Left cardiac atrium (tissue), 4 donors: ENCODE measurements at regions of chr7 and their contacts with region 1.

Region 1: DNA sequence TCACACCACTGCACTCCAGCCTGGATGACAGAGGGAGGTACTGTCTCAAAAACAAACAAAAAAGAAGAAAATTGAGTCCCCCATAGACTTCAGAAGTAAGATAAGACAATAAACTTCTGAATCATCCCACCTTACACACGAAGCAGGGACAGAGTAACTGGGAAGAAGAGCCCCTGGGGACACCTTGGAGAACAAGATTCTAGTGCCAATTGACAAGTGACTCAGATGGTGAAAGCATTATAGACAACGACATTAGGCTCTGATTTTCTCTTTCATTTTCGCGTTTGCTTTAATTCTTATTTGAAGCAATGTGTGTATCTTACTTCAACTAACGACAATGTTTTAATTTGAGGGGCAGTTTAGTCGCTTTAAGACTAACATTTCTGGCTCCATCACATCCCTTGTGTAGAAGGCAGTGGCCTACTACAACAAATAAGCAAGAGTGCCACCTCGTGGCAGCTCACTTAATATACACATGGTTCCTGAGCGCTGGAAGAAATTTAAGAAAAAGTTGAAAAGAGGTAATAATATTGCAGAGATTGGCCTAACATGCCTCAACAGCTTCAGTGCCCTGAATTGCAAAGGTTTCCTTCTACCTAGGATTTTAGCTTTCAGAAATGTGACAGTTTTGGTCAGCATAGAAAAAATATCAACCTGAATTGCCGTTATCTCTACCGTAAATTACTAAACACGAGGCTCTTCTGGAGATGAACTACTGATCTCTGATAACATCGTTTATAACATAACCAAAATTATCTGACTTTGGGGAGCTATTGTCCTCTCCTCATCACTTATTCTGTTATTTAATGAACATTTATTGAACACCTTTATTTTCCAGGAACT is 36.7 kb downstream of the ASNS start:
- DNase-seq: peak; percentile 73
- ATAC-seq: peak; percentile 51 to 65

Region 2: DNA sequence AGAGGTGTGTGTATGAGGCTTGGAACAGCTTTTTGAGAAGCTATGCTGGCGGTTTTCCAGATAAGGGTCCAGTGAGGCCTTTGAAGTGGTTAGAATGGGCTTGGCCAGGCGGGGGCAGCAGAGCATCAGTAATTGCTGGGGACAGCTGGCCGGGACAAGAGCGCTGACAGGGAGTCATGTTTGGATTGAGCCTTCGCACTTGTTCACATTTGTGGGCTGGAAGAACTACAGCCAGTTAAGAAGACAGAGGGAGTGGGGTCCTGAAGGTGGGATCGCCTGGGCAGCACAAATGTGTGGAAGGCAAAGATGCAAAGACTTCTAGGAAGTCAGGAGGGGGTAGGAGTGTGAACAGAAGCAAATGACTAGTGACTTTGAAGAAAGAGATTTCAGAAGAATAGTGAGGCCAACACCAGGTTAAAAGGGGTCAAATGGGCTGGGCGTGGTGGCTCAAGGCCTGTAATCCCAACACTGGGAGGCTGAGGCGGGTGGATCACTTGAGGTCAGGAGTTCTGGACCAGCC is 730.7 kb before region 1 on chr7:
- intact Hi-C with region 1: loop called (anchors 2 to 10 kb)
- DNase-seq: peak; percentile 85
- ATAC-seq: peak; percentile 94 to 95

Region 3: GRCh38 chr7:97293031-97293430 is 542.5 kb before region 1 on chr7:
- intact Hi-C with region 1: no loop called
- DNase-seq: no peak
- ATAC-seq: no peak

Region 4: DNA sequence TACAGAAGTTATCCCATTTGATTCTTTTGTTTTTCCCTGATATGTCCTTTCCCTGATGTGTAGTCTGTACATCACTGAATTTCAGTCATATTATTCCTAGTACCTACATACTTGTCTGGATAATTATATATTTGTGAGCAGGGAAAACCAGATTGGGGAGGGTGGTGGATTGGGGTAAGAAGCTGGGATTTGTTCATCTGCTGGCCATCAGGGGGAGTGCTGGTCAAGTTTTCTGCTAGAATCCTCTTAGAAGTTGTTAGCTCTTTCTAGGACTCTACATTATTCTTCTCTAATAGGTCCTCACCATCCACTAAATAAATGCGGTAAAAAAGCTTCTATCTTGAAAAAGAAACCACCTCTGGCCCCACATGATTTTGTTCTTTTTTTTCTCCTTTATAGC is 336.3 kb before region 1 on chr7:
- intact Hi-C with region 1: loop called (anchors 10 kb)
- DNase-seq: no peak
- ATAC-seq: no peak

Region 5: DNA sequence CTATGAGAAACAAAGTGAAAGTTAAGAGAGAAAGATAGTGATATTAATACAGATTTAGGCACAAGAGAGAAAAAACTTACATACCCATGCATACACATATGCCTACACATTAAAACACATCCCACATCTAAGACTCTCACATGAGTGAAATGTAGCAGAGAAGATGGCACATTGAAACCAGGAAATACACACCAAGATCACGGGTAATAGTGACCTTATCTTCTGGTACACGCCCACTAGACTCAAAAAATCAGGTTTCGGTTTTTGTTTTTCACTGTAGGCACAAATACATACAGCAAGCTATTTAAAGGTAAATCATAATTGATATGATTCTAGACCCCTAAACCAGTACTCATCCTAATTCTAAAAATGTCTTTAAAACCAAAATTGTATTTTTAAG is 328.8 kb before region 1 on chr7:
- intact Hi-C with region 1: loop called in 1 of 2 experiments (anchors 10 kb)
- DNase-seq: no peak
- ATAC-seq: no peak

Region 6: DNA sequence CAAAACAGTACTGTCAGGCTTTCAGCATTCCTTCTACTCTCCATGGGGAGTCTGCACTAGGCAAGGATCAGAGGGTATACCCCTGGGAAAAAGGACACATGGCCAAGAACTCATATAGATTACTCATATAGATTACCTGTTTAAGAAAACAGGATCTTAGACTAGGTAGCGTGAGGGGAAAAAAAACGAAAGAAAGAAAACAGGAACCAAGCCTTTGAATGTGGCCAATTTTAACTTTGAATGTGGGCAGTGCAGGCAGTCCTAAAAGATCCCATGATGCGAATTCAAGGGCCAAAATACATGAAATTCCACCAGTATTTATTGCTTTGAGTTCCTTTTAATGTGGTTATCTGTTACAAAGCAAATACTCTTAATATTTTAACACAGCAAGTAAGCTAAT is 212.2 kb before region 1 on chr7:
- intact Hi-C with region 1: no loop called
- DNase-seq: no peak
- ATAC-seq: no peak